Lower lobe of right lung (tissue), 2 donors: ENCODE measurements at regions of chr21 and their contacts with region 1.

Region 1: GRCh38 chr21:38352536-38353219 is 95.9 kb downstream of the KCNJ15 start:
- DNase-seq: peak; percentile 61
- ATAC-seq: peak; percentile 64 to 70
- H3K4me3 ChIP-seq: peak overlapping the region; percentile 35
- H3K27ac ChIP-seq: peak overlapping the region; percentile 66
- H3K4me1 ChIP-seq: peaks cover 32% of the 10 kb centered on the region
- H3K27me3 ChIP-seq: no peaks in the 10 kb centered on the region
- CTCF ChIP-seq: peak; percentile 79

Region 2: GRCh38 chr21:38165466-38166172 is 187.1 kb before region 1 on chr21:
- intact Hi-C with region 1: loop called (anchors 5 kb)
- DNase-seq: no peak
- ATAC-seq: no peak
- H3K4me3 ChIP-seq: no peak overlapping the region
- H3K27ac ChIP-seq: no peak overlapping the region
- H3K4me1 ChIP-seq: peaks cover 3% of the 10 kb centered on the region
- H3K27me3 ChIP-seq: no peaks in the 10 kb centered on the region
- CTCF ChIP-seq: no peak

Region 3: DNA sequence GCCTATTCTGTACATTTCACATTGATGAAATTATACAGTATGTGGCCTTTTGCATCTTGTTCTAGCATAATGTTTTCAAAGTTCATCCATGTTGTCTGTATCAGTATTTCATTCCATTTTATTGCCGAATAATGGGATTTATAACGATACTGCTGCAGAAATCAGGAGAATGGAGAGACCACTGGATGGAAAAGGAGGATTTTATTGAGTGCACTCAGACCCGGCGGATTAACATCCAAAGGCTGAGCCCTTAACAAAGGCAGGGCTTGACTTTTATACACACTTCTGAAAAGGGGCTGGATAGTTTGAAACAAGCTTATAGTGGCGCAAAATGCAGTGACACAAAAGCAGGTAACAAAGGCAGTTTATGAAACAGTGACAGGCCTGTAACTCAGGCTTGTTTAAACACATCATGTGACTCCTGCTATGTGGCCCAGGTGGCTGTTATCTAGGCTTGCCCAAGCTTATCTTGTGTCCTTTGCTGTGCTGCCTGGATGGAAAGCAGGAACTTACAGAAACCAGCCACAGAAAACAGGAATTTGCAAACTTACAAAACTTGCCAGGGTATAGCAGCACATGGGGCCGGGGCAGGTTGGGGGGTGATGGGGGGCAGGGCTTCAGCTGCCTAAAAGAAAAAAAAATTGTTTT is 128.7 kb before region 1 on chr21:
- intact Hi-C with region 1: loop called (anchors 5 kb)
- DNase-seq: no peak
- ATAC-seq: no peak
- H3K4me3 ChIP-seq: no peak overlapping the region
- H3K27ac ChIP-seq: no peak overlapping the region
- H3K4me1 ChIP-seq: peaks cover 11% of the 10 kb centered on the region
- H3K27me3 ChIP-seq: no peaks in the 10 kb centered on the region
- CTCF ChIP-seq: no peak